ENCODE measurements at regions of chr20 and their contacts with region 1.

Region 1: GRCh38 chr20:1802385-1803060 is 92.7 kb upstream of the SIRPA start:
- DNase-seq: peak; percentile 87 to 91
- ATAC-seq: peak; percentile 87
- H3K4me3 ChIP-seq: peak overlapping the region; percentile 60 to 73
- H3K27ac ChIP-seq: no peak overlapping the region
- H3K4me1 ChIP-seq: no peaks in the 10 kb centered on the region
- H3K27me3 ChIP-seq: no peaks in the 10 kb centered on the region

Region 2: GRCh38 chr20:1764136-1765033 is 38.1 kb before region 1 on chr20:
- intact Hi-C with region 1: loop called in 1 of 2 experiments (anchors 5 kb)
- DNase-seq: peak; percentile 86 to 88
- ATAC-seq: peak; percentile 85
- H3K4me3 ChIP-seq: no peak overlapping the region
- H3K27ac ChIP-seq: no peak overlapping the region
- H3K4me1 ChIP-seq: no peaks in the 10 kb centered on the region
- H3K27me3 ChIP-seq: no peaks in the 10 kb centered on the region

Region 3: DNA sequence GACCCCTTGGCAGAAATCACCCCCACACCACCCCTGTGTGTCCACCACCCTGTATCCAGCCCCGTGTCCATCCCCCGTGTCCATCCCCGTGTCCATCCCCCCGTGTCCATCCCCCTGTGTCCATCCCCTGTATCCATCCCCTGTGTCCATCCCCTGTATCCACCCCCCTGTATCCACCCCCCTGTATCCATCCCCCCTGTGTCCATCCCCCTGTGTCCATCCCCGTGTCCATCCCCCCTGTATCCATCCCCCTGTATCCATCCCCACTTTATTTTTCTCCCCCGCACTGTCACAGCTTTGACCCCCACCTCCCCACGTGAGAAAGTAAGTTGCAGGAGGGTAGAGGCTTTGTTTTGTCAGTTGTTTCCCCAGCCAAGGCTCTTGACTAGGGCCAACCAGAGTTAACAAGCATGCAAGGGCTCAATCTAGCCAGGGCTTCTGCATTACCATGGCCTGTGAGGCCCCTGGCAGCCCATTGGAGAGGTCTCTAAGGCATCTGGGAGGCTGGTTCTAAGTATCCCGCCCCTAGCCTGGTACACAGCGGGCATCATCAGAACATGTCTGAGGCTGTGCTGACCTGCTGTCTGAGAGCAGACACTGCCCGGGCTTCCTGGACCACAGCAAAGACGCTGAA is 74.6 kb after region 1 on chr20:
- intact Hi-C with region 1: loop called in 1 of 2 experiments (anchors 5 kb)
- DNase-seq: no peak
- ATAC-seq: no peak
- H3K4me3 ChIP-seq: no peak overlapping the region
- H3K27ac ChIP-seq: no peak overlapping the region
- H3K4me1 ChIP-seq: peaks cover 0 to 2% of the 10 kb centered on the region in 2 donors
- H3K27me3 ChIP-seq: no peaks in the 10 kb centered on the region

Region 4: GRCh38 chr20:1894951-1895673 is 92.6 kb after region 1 on chr20 and contains the start of gene SIRPA:
- intact Hi-C with region 1: loop called in 1 of 2 experiments (anchors 2 kb)
- DNase-seq: peak; percentile 80 to 91
- ATAC-seq: peak; percentile 70
- H3K4me3 ChIP-seq: peak within 1 kb of the TSS; percentile 67 to 92
- H3K27ac ChIP-seq: peak within 1 kb of the TSS; percentile 73 to 95
- H3K4me1 ChIP-seq: peaks cover 0 to 4% of the 10 kb centered on the region in 2 donors
- H3K27me3 ChIP-seq: no peaks in the 10 kb centered on the region
- total RNA-seq, gene SIRPA: 41.4 to 62.9 TPM

Region 5: GRCh38 chr20:1943258-1944002 is 140.9 kb after region 1 on chr20:
- intact Hi-C with region 1: loop called in 1 of 2 experiments (anchors 5 kb)
- DNase-seq: no peak
- ATAC-seq: peak; percentile 50
- H3K4me3 ChIP-seq: no peak overlapping the region
- H3K27ac ChIP-seq: no peak overlapping the region
- H3K4me1 ChIP-seq: no peaks in the 10 kb centered on the region
- H3K27me3 ChIP-seq: no peaks in the 10 kb centered on the region

Region 6: GRCh38 chr20:2101865-2102584 is 299.5 kb after region 1 on chr20:
- intact Hi-C with region 1: loop called in 1 of 2 experiments (anchors 10 kb)
- DNase-seq: peak; percentile 95 to 97
- ATAC-seq: peak; percentile 97
- H3K4me3 ChIP-seq: peak overlapping the region; percentile 52 to 67
- H3K27ac ChIP-seq: peak overlapping the region; percentile 58 to 92
- H3K4me1 ChIP-seq: peaks cover 2 to 12% of the 10 kb centered on the region in 2 donors
- H3K27me3 ChIP-seq: no peaks in the 10 kb centered on the region

Measured in aorta (tissue), 5 donors.